Astrocyte of the cerebellum (primary cell): ENCODE measurements at regions of chr11 and their contacts with region 1.

Region 1: GRCh38 chr11:104286129-104286528 is 122.2 kb upstream of the PDGFD start:
- DNase-seq: no peak
- H3K4me3 ChIP-seq: no peak overlapping the region
- CTCF ChIP-seq: no peak

Region 2: GRCh38 chr11:104191124-104191523 is 95.0 kb before region 1 on chr11:
- in situ Hi-C with region 1: loop called (anchors 5 kb)
- DNase-seq: no peak
- H3K4me3 ChIP-seq: no peak overlapping the region
- CTCF ChIP-seq: no peak